ENCODE measurements at regions of chr1 and their contacts with region 1.

Region 1: DNA sequence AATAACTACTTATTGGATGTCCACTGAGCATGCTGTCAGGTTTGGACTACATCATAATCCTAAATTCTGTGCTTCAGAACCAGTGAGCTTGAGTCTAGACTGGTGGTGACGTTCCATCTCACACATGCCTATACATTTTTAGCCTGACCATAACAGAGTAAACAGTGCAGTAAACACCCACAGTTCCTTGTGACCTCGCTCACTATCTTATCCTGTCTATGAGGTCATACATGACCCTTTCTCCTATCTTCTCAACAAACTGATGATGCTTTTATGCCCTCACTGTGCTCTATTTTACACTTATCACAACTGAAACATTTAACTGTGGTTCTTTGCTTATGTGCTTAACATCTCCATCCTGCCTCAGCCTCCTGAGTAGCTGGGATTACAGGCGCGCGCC is 91.2 kb downstream of the ENAH start:
- DNase-seq: no peak
- H3K4me3 ChIP-seq: no peak overlapping the region
- H3K27ac ChIP-seq: no peak overlapping the region
- H3K4me1 ChIP-seq: peaks cover 0 to 5% (median under 1%) of the 10 kb centered on the region in 4 donors
- H3K27me3 ChIP-seq: no peaks in the 10 kb centered on the region
- CTCF ChIP-seq: no peak
- EP300 ChIP-seq: no peak
- POLR2A ChIP-seq: no peak

Region 2: GRCh38 chr1:225388372-225388771 is 173.3 kb before region 1 on chr1:
- in situ Hi-C with region 1: no loop called
- intact Hi-C with region 1: no loop called
- DNase-seq: no peak
- H3K4me3 ChIP-seq: no peak overlapping the region
- H3K27ac ChIP-seq: no peak overlapping the region
- H3K4me1 ChIP-seq: no peaks in the 10 kb centered on the region
- H3K27me3 ChIP-seq: no peaks in the 10 kb centered on the region
- CTCF ChIP-seq: no peak
- EP300 ChIP-seq: no peak
- POLR2A ChIP-seq: no peak

Region 3: DNA sequence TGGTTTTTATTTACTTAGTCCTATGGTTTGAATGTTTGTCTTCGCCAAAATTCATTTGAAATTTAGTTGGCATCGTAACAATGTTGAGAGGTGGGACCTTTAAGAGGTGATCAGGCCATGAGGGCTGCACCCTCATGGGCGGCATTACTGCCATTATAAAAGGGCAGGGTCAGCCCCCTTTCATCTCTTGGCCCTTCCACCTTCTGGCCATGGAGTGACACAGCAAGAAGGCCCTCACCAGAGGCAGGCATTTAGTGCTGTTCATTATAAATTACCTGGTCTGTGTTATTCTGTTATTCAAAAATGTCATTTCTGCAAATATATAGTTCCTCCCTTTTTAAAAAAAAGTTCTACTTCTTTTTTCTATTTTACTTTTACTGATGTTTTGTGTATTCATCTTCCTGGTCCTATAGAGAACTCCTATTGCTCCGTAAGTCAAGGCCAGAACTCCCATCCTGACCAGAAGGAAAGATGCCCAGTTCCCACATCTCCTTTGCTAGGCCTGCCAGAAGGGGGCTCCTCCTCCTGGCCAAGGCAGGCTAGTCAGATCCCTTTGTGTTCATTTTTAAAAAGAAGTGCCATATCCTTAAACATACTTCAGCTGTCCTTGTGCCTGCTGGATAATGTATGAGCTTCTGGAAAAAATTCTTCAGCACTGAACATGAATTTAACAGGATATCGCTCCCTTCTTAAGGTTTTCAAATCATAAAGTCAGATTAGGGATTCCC is 123.8 kb before region 1 on chr1:
- in situ Hi-C with region 1: no loop called
- intact Hi-C with region 1: no loop called
- DNase-seq: peak; percentile 31
- H3K4me3 ChIP-seq: no peak overlapping the region
- H3K27ac ChIP-seq: peak overlapping the region; percentile 31 to 93 (median 72)
- H3K4me1 ChIP-seq: peaks cover 3 to 46% (median 42%) of the 10 kb centered on the region in 4 donors
- H3K27me3 ChIP-seq: no peaks in the 10 kb centered on the region
- CTCF ChIP-seq: peak in 4 of 5 experiments; percentile 16 to 24 (median 18)
- EP300 ChIP-seq: no peak
- POLR2A ChIP-seq: no peak

Region 4: DNA sequence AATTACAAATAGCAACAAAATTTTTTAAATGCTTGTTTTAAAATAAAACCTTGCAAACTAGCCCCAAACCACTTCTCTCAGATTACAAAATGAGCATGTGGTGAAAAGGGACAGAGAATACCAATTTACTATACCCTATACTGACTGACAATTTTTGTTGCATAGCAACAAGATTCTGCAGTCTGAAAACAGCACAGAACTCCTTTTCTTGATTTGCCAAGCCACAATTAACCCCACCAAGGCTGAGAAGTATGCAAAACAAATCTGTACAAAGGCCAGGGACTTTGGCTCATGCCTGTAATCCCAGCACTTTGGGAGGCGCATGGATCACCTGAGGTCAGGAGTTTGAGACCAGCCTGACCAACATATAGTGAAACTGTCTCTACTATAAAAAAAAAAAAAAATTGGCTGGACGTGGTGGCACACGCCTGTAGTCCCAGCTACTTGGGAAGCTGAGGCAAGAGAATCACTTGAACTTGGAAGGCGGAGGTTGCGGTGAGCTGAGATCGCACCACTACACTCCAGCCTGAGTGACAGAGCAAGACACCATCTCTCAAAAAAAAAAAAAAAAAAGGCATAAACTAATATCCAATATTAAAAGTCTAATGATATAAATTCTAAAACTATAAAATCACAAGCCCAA is 69.5 kb after region 1 on chr1:
- in situ Hi-C with region 1: no loop called
- intact Hi-C with region 1: loop called (anchors 2 kb)
- DNase-seq: no peak
- H3K4me3 ChIP-seq: no peak overlapping the region
- H3K27ac ChIP-seq: no peak overlapping the region
- H3K4me1 ChIP-seq: peaks cover 3 to 35% (median 5%) of the 10 kb centered on the region in 4 donors
- H3K27me3 ChIP-seq: no peaks in the 10 kb centered on the region
- CTCF ChIP-seq: no peak
- EP300 ChIP-seq: no peak
- POLR2A ChIP-seq: no peak

Measured in transverse colon (tissue), 4 donors.